GM18951 (cell line): ENCODE measurements at regions of chr1 and their contacts with region 1.

Region 1: GRCh38 chr1:45490626-45491486 is at the start of gene TESK2:
- POLR2A ChIP-seq: peak; percentile 74

Region 2: GRCh38 chr1:44799770-44800584 is 690.9 kb before region 1 on chr1 and contains the start of gene PLK3:
- in situ Hi-C with region 1: loop called (anchors 25 kb)
- POLR2A ChIP-seq: peak; percentile 98

Region 3: GRCh38 chr1:45011837-45012638 is 478.8 kb before region 1 on chr1 and contains the start of gene UROD:
- in situ Hi-C with region 1: loop called (anchors 10 kb)
- POLR2A ChIP-seq: peak; percentile 76

Region 4: GRCh38 chr1:45359882-45360513 is 130.9 kb before region 1 on chr1:
- in situ Hi-C with region 1: loop called (anchors 5 kb)
- POLR2A ChIP-seq: no peak

Region 5: DNA sequence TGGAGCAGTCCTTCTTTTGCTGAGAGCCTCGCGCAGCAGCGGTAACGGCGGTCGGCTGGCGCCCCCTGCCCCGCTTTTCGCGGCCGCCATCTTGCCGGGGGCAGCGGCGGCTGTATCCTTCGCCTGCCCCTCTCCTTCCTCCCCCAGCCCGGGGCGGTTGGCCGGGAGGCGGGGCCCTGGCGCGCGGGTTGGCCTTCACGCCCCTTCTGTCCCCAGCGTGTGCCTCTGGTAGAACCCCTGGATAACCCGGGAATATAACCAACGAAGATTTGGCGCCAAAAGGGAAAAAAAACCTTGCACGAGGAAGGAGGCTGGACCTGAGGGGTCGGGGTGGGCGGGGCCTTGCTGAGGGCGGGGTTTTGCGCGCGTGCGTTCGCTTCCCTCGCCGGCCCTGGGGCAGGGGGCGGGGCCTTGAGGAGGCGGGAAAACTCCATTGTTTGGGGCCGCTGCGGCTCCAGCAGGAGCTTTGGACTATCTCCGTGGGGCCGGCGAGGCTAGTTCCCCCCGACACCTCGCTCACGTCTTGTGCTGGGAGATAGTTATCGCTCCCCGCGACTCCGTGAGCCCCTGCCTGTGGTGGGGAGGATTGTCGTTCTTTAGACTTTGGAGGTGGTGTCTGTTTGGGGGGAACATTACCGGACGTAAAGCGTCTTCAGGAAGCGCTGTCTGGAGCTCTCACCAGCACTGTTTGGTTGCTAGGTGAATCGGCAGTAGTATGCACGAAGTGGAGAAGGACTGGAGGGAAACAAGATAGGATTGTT is 93.7 kb after region 1 on chr1:
- in situ Hi-C with region 1: no loop called
- POLR2A ChIP-seq: no peak